GM12878 (cell line): ENCODE measurements at regions of chr4 and their contacts with region 1.

Region 1: GRCh38 chr4:121726642-121727268 is 30.0 kb upstream of the ANXA5 start:
- DNase-seq: peak; percentile 47
- ATAC-seq: peak; percentile 97
- H3K4me3 ChIP-seq: no peak overlapping the region
- H3K27ac ChIP-seq: no peak overlapping the region
- H3K4me1 ChIP-seq: peaks cover 11% of the 10 kb centered on the region
- H3K27me3 ChIP-seq: no peaks in the 10 kb centered on the region; a peak in 1 of 4 replicates
- CTCF ChIP-seq: peak; percentile 57 to 75 (median 68); a peak in 5 of 6 replicates
- EP300 ChIP-seq: no peak
- POLR2A ChIP-seq: no peak
- RAD21 ChIP-seq: peak; percentile 81

Region 2: GRCh38 chr4:121370729-121371325 is 355.9 kb before region 1 on chr4:
- CTCF ChIA-PET with region 1: no interaction called
- POLR2A ChIA-PET with region 1: no interaction called
- RAD21 ChIA-PET with region 1: no interaction called
- SMC1A ChIA-PET with region 1: interaction called, 4 read pairs
- in situ Hi-C with region 1: no loop called
- intact Hi-C with region 1: loop called (anchors 5 kb)
- DNase-seq: no peak
- ATAC-seq: peak; percentile 81
- H3K4me3 ChIP-seq: no peak overlapping the region
- H3K27ac ChIP-seq: no peak overlapping the region
- H3K4me1 ChIP-seq: no peaks in the 10 kb centered on the region
- H3K27me3 ChIP-seq: no peaks in the 10 kb centered on the region; a peak in 1 of 4 replicates
- CTCF ChIP-seq: peak; percentile 34 to 64 (median 52); a peak in 5 of 6 replicates
- EP300 ChIP-seq: no peak
- POLR2A ChIP-seq: no peak
- RAD21 ChIP-seq: peak; percentile 47

Region 3: DNA sequence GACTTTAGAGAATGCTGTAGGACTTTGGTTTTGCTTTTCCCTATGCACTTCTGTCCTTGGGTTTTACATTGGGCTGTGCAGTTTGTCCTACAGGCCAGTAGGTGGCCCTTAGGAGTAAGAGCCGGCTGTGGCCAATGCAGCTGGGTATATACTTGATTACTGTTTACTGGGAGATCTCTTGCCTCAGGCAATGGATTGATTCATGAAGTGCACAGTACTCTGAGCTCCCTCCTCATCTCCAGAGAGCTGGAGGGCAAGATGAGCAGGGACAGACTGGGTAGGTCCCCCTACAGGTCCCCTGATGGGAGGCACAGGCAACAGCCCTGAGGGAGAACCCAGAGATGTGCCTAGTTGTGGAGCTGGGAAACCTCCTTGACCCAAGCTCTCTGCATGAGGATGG is 242.1 kb before region 1 on chr4:
- CTCF ChIA-PET with region 1: interaction called, 8 read pairs
- POLR2A ChIA-PET with region 1: no interaction called
- RAD21 ChIA-PET with region 1: no interaction called
- SMC1A ChIA-PET with region 1: no interaction called
- in situ Hi-C with region 1: loop called (anchors 5 kb)
- intact Hi-C with region 1: loop called (anchors 2 kb)
- DNase-seq: no peak
- ATAC-seq: peak; percentile 97
- H3K4me3 ChIP-seq: no peak overlapping the region
- H3K27ac ChIP-seq: no peak overlapping the region
- H3K4me1 ChIP-seq: no peaks in the 10 kb centered on the region
- H3K27me3 ChIP-seq: no peaks in the 10 kb centered on the region
- CTCF ChIP-seq: peak; percentile 72 to 83 (median 81)
- EP300 ChIP-seq: no peak
- POLR2A ChIP-seq: no peak
- RAD21 ChIP-seq: peak; percentile 73

Region 4: GRCh38 chr4:121696581-121697461 is 29.9 kb before region 1 on chr4 and contains the start of gene ANXA5:
- CTCF ChIA-PET with region 1: interaction called, 4 read pairs
- POLR2A ChIA-PET with region 1: no interaction called
- RAD21 ChIA-PET with region 1: interaction called, 7 read pairs
- SMC1A ChIA-PET with region 1: no interaction called
- in situ Hi-C with region 1: no loop called
- intact Hi-C with region 1: loop called (anchors 1 kb)
- DNase-seq: no peak
- ATAC-seq: peak; percentile 95
- H3K4me3 ChIP-seq: peak within 1 kb of the TSS; percentile 90
- H3K27ac ChIP-seq: peak within 1 kb of the TSS; percentile 85
- H3K4me1 ChIP-seq: peaks cover 15% of the 10 kb centered on the region
- H3K27me3 ChIP-seq: no peaks in the 10 kb centered on the region
- CTCF ChIP-seq: peak; percentile 1 to 54 (median 33); a peak in 3 of 6 replicates
- EP300 ChIP-seq: 0 out of 4 replicates have a peak, but pooled peaks of 1 of the 2 experiments have one; percentile 3
- POLR2A ChIP-seq: peak; percentile 94
- RAD21 ChIP-seq: peak; percentile 38; the same call in 1 of the 2 replicates
- polyA plus RNA-seq, gene ANXA5: 218 to 249 TPM

Region 5: GRCh38 chr4:121711263-121712000 is 15.3 kb before region 1 on chr4:
- CTCF ChIA-PET with region 1: interaction called, 8 read pairs
- POLR2A ChIA-PET with region 1: interaction called, 6 read pairs
- RAD21 ChIA-PET with region 1: no interaction called
- SMC1A ChIA-PET with region 1: interaction called, 17 read pairs
- in situ Hi-C with region 1: no loop called
- intact Hi-C with region 1: no loop called
- DNase-seq: no peak
- ATAC-seq: peak; percentile 92
- H3K4me3 ChIP-seq: peak overlapping the region; percentile 54; the same call in 1 of the 2 replicates
- H3K27ac ChIP-seq: no peak overlapping the region
- H3K4me1 ChIP-seq: peaks cover 6% of the 10 kb centered on the region; the same call in 1 of the 2 replicates
- H3K27me3 ChIP-seq: no peaks in the 10 kb centered on the region
- CTCF ChIP-seq: no peak
- EP300 ChIP-seq: no peak
- POLR2A ChIP-seq: no peak
- RAD21 ChIP-seq: no peak